ENCODE measurements at regions of chr1 and their contacts with region 1.

Region 1: GRCh38 chr1:185309566-185309965 is 7.5 kb downstream of the IVNS1ABP start:
- DNase-seq: no peak
- ATAC-seq: no peak
- H3K4me3 ChIP-seq: no peak overlapping the region
- H3K4me3 Mint-ChIP-seq: no peak overlapping the region
- H3K27ac ChIP-seq: no peak overlapping the region
- H3K27ac Mint-ChIP-seq: no peak overlapping the region
- H3K4me1 ChIP-seq: peaks cover 29% of the 10 kb centered on the region
- H3K4me1 Mint-ChIP-seq: peaks cover 40% of the 10 kb centered on the region
- H3K27me3 ChIP-seq: no peaks in the 10 kb centered on the region
- H3K27me3 Mint-ChIP-seq: no peaks in the 10 kb centered on the region
- CTCF ChIP-seq: no peak

Region 2: DNA sequence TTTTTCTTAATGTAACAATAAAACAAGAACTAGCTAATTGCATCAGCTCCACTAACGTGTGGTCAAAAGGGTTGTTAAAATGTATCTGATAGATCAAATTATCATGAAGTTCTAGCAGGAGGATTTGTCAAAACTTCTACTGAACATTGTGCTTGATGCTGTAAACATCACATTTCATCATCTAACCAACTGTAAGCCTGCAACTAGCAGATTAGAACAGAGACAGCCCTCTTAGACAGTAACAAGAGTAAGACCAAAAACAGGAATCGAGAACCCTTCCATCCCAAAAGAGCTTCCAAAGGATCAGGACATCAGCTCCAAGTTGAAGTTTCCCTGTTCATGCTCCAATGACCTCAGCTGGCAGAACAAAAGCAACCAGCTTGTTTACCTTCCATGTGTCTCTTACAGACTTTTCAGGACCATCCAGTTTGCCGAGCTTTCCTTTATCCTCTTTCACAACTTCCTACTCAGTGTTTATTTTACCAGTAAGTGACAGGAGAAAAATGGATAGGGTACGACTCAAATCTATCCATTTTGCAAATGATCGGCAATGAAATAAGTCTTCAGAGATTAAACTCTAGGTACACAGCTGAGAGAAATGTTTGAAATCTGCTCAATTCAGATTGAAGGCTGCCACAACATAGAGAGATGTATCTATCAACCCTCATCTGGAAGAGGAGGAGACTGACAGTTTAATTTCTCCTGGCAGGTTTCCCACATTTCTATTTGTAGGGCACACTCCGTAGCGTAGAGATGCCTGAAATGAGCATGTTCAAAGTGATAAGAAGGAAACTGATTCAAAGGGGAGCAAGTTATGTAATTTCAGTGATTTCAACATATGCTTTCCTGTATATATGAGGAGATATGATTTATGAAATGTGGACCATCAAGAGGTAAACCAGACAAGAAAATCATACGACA is 379.6 kb before region 1 on chr1:
- CTCF ChIA-PET with region 1: no interaction called
- POLR2A ChIA-PET with region 1: no interaction called
- intact Hi-C with region 1: no loop called
- DNase-seq: no peak
- ATAC-seq: no peak
- H3K4me3 ChIP-seq: no peak overlapping the region
- H3K4me3 Mint-ChIP-seq: no peak overlapping the region
- H3K27ac ChIP-seq: no peak overlapping the region
- H3K27ac Mint-ChIP-seq: no peak overlapping the region
- H3K4me1 ChIP-seq: no peaks in the 10 kb centered on the region
- H3K4me1 Mint-ChIP-seq: peaks cover 3% of the 10 kb centered on the region
- H3K27me3 ChIP-seq: no peaks in the 10 kb centered on the region
- H3K27me3 Mint-ChIP-seq: no peaks in the 10 kb centered on the region
- CTCF ChIP-seq: no peak

Region 3: GRCh38 chr1:185291652-185292051 is 17.9 kb before region 1 on chr1:
- CTCF ChIA-PET with region 1: interaction called, 3 read pairs
- POLR2A ChIA-PET with region 1: interaction called, 5 read pairs
- intact Hi-C with region 1: loop called in 1 of 2 experiments (anchors 2 kb)
- DNase-seq: no peak
- ATAC-seq: no peak
- H3K4me3 ChIP-seq: no peak overlapping the region
- H3K4me3 Mint-ChIP-seq: no peak overlapping the region
- H3K27ac ChIP-seq: no peak overlapping the region
- H3K27ac Mint-ChIP-seq: peak overlapping the region; percentile 45
- H3K4me1 ChIP-seq: no peaks in the 10 kb centered on the region
- H3K4me1 Mint-ChIP-seq: peaks cover 31% of the 10 kb centered on the region
- H3K27me3 ChIP-seq: no peaks in the 10 kb centered on the region
- H3K27me3 Mint-ChIP-seq: no peaks in the 10 kb centered on the region
- CTCF ChIP-seq: no peak